ENCODE measurements at regions of chr5 and their contacts with region 1.

Region 1: DNA sequence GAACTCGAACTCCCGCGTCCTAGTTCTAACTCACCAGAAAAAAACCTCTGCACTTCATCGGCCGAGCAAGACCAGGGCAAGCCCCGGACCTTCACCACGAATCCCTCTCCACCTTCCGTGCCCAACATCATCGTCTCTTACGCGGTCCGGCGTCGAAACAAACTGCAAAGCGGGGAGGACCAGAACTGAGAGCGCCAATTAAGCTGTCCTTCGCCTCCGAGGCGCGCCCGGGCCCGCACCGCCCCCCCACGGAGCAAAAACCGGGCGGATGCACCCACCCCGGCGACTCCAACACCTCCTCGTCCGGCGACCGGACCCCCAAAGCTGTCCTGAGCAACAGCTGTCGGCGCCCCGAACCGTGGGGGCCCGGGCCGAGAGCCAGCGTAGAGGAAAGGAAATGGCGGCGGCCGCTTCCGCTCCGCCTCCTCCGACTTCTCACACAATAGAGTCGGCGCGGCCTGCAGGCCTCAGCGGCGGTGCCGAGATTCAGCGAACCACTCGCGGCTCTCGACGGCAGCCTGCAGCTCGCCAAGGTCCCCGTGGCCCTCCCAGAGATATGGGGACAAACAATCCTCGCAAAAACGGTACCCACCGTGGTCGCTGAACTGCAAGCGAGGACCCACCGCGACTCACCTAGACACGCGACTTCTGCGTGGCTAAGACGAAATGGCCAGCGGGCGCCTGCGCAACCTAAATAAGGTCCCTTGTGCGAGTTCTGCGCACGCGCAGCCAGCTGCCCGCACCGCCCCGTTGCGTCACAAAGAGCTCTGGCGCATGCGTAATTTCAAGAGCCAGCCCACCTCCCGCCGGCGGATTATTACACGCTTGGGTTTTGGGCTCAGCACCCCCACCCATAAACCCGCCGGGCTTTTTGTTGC is at the start of gene HNRNPH1:
- DNase-seq: peak; percentile 99
- H3K4me3 Mint-ChIP-seq: peak within 1 kb of the TSS; percentile 99
- H3K27ac Mint-ChIP-seq: peak within 1 kb of the TSS; percentile 99
- H3K4me1 Mint-ChIP-seq: peaks cover 39% of the 10 kb centered on the region
- H3K27me3 Mint-ChIP-seq: peaks cover 5% of the 10 kb centered on the region
- total RNA-seq, gene HNRNPH1: 952 and 964 TPM in 2 replicates

Region 2: GRCh38 chr5:178204182-178204894 is 1418.9 kb before region 1 on chr5 and contains the start of gene HNRNPAB:
- intact Hi-C with region 1: loop called (anchors 5 kb)
- DNase-seq: peak; percentile 99
- H3K4me3 Mint-ChIP-seq: peak within 1 kb of the TSS; percentile 98
- H3K27ac Mint-ChIP-seq: peak within 1 kb of the TSS; percentile 99
- H3K4me1 Mint-ChIP-seq: peaks cover 26% of the 10 kb centered on the region
- H3K27me3 Mint-ChIP-seq: peaks cover 2% of the 10 kb centered on the region
- total RNA-seq, gene HNRNPAB: 492 and 507 TPM in 2 replicates

Region 3: DNA sequence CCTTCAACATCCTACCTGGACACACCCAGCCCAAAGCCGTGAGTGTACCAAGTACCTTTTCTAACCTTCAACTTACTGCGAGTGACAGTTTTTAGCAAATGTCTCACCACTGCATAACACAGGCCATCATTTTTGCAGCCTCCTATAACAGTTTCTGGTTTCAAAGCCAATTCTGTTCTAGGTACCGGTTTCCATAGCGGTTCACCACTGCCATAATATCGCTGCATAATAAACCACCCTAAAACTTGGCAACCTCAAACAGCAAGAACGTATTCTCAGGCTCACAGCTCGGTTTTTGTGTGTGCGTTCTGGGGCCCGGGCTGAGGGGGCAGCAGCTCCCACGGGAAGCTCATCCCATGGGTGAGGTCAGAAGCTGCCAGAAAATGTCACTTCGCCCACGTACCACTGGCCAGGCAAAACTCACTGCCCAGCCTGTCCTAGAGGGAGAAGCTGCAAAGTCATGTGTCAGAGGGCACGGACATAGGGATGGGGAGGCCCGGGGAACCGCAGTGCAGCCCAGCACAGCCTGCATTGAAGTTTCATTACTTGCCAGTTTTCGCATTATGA is 262.1 kb before region 1 on chr5:
- intact Hi-C with region 1: no loop called
- DNase-seq: no peak
- H3K4me3 Mint-ChIP-seq: no peak overlapping the region
- H3K27ac Mint-ChIP-seq: no peak overlapping the region
- H3K4me1 Mint-ChIP-seq: no peaks in the 10 kb centered on the region
- H3K27me3 Mint-ChIP-seq: no peaks in the 10 kb centered on the region

Region 4: DNA sequence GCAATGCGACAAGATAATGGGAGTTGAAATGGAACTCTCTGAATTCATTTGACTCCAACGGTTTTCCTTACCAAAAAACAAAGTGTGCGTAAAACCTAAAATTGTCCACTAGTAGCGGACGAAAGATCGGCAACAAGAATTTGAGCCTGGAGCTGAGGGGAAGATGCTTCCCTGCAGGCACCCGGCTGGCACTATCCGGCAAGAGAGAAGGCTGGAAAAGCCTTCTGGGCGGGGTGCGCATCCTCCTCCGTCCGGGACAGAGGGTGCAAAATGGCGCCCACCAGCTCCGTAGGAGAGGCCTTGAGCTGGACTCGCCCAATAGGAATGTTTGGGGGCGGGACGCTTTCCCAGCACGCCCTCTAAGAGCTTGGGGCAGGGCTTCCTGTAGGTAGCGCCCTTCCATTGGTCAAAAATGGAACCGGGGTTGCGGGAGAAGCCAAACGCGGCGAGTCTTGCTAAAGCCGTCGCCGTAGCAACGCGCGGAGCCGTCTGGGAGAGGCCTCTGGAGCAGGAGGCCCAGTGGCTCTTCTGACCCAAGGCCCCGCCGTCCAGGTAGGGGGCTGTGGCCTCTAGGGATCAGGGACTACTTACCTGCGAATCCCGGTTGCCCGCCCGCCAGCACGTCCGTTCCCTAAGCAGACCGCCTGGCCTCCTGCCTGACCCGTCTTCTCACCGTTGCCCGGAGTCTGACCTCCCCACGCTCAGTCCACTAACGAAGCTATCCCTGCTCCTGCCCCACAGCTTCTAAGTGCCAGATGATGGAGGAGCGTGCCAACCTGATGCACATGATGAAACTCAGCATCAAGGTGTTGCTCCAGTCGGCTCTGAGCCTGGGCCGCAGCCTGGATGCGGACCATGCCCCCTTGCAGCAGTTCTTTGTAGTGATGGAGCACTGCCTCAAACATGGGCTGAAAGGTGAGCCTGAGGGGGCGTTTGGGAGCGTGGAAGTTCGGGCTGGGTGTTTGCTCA is 63.7 kb before region 1 on chr5:
- intact Hi-C with region 1: loop called (anchors 1 kb)
- DNase-seq: peak; percentile 98
- H3K4me3 Mint-ChIP-seq: peak overlapping the region; percentile 92
- H3K27ac Mint-ChIP-seq: peak overlapping the region; percentile 90
- H3K4me1 Mint-ChIP-seq: peaks cover 18% of the 10 kb centered on the region
- H3K27me3 Mint-ChIP-seq: no peaks in the 10 kb centered on the region

Region 5: DNA sequence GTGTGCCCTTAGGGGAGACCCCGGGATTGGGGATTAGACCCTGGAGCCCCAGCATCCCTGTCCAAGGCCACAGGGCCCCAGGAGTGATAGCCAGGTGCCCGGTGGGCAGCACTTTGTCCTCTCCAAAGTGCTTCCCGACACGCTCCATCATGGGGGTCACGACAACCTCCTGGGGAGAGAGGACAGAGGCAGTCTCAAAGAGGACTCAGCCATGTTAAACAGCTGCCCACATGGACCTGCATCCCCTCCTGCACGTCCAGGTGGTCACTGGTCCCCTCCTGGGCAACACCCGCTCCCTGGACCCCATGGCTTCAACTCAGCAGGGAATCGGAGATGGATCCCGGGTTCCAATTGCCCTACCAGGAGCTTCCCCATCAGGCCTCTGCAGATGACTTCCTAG is 20.3 kb after region 1 on chr5:
- intact Hi-C with region 1: no loop called
- DNase-seq: no peak
- H3K4me3 Mint-ChIP-seq: no peak overlapping the region
- H3K27ac Mint-ChIP-seq: no peak overlapping the region
- H3K4me1 Mint-ChIP-seq: no peaks in the 10 kb centered on the region
- H3K27me3 Mint-ChIP-seq: peaks cover 2% of the 10 kb centered on the region

Region 6: DNA sequence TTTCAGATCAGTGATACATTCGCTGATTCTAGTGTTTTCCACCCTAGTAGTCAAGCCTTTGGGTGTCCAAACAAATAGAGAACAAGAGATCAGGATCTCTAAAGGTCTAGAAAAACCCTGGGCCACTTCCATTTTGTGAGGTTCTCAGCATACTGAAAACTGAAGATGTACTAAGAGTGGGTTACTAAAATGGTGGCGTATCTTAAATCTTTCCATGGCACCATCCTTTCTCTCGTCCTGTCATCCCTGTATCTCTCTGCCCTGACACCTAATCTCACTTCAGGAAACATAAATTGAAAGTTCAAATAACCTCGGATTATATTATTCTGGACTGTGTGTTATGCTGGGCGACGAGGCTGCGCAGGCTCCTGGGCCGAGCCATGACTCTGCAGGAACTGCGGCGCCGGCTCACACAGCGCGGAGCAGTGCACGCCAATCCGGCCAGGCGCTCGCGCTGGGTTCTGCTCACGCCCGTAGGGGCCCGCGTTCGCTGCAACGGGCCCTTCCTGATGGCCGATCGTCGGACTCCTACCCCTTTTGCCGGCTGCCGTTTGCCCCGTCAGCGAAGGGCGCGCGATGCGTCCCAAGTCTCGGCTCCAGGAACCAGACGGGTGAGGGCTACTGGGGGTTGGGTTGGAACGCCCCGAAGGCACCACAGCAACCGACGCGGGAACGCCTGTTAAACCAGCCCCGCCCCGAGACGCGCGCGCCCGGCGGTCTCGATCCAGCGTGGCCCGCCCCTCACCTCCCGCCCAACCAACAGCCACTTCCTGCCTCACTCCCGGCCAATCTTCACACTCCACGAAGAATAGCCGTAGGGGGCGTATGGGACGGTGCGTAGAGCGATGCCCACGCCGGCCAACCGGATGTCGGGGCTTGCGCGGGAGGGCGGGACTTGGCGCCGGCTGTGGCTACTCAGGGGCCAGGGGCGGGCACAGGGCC is 75.0 kb after region 1 on chr5:
- intact Hi-C with region 1: loop called (anchors 1 kb)
- DNase-seq: peak; percentile 100
- H3K4me3 Mint-ChIP-seq: peak overlapping the region; percentile 89
- H3K27ac Mint-ChIP-seq: peak overlapping the region; percentile 99
- H3K4me1 Mint-ChIP-seq: peaks cover 27% of the 10 kb centered on the region
- H3K27me3 Mint-ChIP-seq: no peaks in the 10 kb centered on the region

Region 7: DNA sequence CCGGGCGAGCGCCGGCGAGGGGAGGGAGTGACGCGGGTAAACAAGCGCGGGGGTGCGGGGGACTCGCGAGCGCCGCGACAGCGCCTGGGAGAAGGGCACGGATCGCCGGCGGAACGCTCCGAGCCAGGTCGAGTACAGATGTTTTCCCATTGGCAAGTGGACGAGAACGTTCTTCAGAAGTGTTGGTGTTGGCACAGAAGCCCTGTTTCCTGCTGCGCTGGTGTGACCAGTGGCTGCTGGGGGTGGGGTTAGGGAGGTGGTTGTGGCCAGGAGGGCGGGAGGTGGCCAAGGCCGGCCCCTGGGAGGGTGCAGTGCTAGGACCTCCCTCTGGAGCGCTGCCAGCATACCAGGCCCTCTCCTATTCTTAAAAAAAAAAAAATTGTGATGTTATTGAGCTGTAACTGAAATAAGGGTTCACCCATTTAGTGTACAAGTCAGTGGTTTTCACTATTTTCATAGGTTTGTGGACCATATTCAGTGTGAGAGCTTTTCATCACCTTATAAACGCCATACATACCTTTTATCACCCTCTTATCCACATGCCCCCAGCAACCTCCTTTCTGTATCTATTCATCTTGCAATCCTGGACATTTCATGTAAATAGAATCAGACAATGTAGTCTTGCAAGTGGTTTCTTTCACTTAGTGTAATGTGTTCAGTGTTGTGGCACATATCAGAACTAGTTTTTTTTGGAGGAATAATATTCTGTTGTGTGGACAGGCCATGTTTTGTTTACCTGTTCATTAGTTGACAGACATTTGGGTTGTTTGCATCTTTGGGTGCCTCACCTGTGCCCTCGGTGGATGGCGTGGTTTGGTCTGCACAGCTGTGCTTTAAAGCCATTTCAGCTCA is 198.6 kb after region 1 on chr5:
- intact Hi-C with region 1: loop called (anchors 5 kb)
- DNase-seq: peak; percentile 96
- H3K4me3 Mint-ChIP-seq: peak overlapping the region; percentile 96
- H3K27ac Mint-ChIP-seq: peak overlapping the region; percentile 91
- H3K4me1 Mint-ChIP-seq: peaks cover 35% of the 10 kb centered on the region
- H3K27me3 Mint-ChIP-seq: no peaks in the 10 kb centered on the region

Region 8: GRCh38 chr5:180071531-180072255 is 448.5 kb after region 1 on chr5 and contains the start of gene RNF130:
- intact Hi-C with region 1: loop called (anchors 5 kb)
- DNase-seq: peak; percentile 95
- H3K4me3 Mint-ChIP-seq: peak within 1 kb of the TSS; percentile 77
- H3K27ac Mint-ChIP-seq: peak within 1 kb of the TSS; percentile 36
- H3K4me1 Mint-ChIP-seq: peaks cover 9% of the 10 kb centered on the region
- H3K27me3 Mint-ChIP-seq: peaks cover 41% of the 10 kb centered on the region
- total RNA-seq, gene RNF130: 7.3 and 8.9 TPM in 2 replicates

Region 9: DNA sequence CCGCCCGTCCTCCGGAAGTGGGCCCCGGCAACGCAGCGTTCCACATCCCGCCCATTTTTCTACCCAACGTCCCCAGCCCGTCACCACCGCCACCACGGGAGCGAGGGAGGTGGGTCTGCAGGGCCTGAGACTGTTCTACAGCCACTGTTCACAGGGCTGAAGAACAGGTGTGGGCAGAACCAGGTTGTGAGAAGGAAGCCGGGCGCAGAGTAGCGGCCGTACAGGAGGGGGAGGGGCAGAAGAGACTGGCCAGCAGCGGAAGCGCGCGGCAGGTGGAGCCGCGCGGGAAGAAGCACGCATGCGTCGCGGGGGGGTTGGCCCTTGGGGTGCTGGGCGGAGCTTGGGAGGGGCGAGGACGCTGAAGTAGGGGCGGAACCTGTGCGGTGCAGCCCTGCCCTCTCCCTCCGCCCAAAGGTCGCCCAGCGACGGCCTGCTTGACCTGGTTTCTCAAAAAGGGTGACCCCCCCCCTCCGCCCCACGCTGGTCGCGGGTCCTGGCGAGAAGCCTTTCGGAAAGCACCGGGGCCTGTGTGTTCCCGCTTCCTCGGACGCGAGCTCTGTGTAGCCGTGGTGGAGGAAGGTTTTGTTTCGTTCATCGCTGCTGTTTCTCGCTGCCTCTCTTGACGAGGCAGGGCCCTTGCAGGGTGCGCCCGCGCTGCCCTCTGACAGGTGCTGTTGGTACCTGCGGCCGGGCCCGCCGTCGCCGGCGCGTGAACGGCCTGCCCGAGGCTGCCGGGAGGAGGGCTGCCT is 1187.1 kb after region 1 on chr5:
- intact Hi-C with region 1: loop called (anchors 10 kb)
- DNase-seq: peak; percentile 98
- H3K4me3 Mint-ChIP-seq: peak overlapping the region; percentile 78
- H3K27ac Mint-ChIP-seq: peak overlapping the region; percentile 99
- H3K4me1 Mint-ChIP-seq: peaks cover 63% of the 10 kb centered on the region
- H3K27me3 Mint-ChIP-seq: no peaks in the 10 kb centered on the region

Measured in activated CD4-positive, alpha-beta T cell treated with anti-CD3 and anti-CD28 coated beads, Interleukin-2, amount 10 ng/mL, durations not matched to agents 24 days and 14 days (primary cell).